KBM-7 (cell line): ENCODE measurements at regions of chr22 and their contacts with region 1.

Region 1: DNA sequence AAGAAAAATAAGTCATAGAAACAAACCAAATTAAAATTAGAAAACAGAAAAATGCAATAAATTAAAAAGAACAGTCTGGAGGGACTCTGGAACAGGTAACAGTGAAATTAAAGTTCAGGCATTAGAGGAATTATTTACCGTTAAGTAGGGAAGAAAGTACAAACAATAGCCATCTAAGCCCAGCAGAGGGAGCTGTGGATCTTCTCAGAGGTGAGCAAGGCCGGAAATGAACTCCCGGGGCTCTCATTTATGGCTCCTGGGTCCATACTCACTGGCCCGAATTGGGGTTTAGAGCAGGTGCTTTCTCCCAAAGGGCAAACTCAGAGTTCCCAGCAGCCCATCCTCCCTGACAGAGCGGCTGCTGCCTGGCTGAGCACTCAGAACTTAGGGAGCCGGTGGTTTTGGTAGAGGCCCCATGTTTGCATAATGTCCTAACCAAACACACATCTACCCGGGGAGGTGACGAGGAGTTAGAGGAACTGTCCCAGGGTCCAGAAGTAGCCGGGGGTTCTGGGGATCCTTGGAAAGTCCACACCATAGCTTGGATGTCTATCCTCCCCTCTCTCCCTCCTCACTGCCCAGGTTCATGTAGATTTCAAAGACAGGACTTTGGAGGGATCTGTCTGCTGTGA is 87.8 kb upstream of the VPREB1 start:
- DNase-seq: peak; percentile 67

Region 2: GRCh38 chr22:22060200-22061084 is 96.4 kb before region 1 on chr22:
- in situ Hi-C with region 1: loop called (anchors 25 kb)
- DNase-seq: peak; percentile 19